H1 (cell line): ENCODE measurements at regions of chr1 and their contacts with region 1.

Region 1: GRCh38 chr1:165914136-165914798 is 86.9 kb downstream of the UCK2 start:
- DNase-seq: peak in 1 of 2 experiments; percentile 72
- H3K4me3 ChIP-seq: no peak overlapping the region
- H3K27ac ChIP-seq: no peak overlapping the region
- H3K4me1 ChIP-seq: no peaks in the 10 kb centered on the region
- H3K27me3 ChIP-seq: no peaks in the 10 kb centered on the region
- CTCF ChIP-seq: peak; percentile 15 to 90 (median 83)
- EP300 ChIP-seq: no peak
- POLR2A ChIP-seq: no peak
- RAD21 ChIP-seq: peak; percentile 95

Region 2: GRCh38 chr1:165717918-165718515 is 196.2 kb before region 1 on chr1:
- CTCF ChIA-PET with region 1: interaction called, 10 read pairs
- POLR2A ChIA-PET with region 1: interaction called, 3 read pairs
- DNase-seq: peak in 1 of 2 experiments; percentile 64
- H3K4me3 ChIP-seq: no peak overlapping the region
- H3K27ac ChIP-seq: no peak overlapping the region
- H3K4me1 ChIP-seq: peaks cover 0 to 2% (median 0%) of the 10 kb centered on the region in 4 experiments; a peak in 1 of 7 replicates
- H3K27me3 ChIP-seq: no peaks in the 10 kb centered on the region
- CTCF ChIP-seq: peak in 2 of 3 experiments; percentile 67 to 85; a peak in 3 of 4 replicates
- EP300 ChIP-seq: no peak
- POLR2A ChIP-seq: no peak
- RAD21 ChIP-seq: peak; percentile 93 to 95

Region 3: GRCh38 chr1:165836664-165837482 is 77.4 kb before region 1 on chr1:
- CTCF ChIA-PET with region 1: no interaction called
- POLR2A ChIA-PET with region 1: no interaction called
- DNase-seq: no peak
- H3K4me3 ChIP-seq: 0 out of 8 replicates have a peak overlapping the region, but pooled peaks of 1 of the 4 experiments have one; percentile 18
- H3K27ac ChIP-seq: no peak overlapping the region
- H3K4me1 ChIP-seq: peaks cover 14 to 44% (median 28%) of the 10 kb centered on the region in 4 experiments
- H3K27me3 ChIP-seq: no peaks in the 10 kb centered on the region
- CTCF ChIP-seq: no peak
- EP300 ChIP-seq: no peak
- POLR2A ChIP-seq: no peak
- RAD21 ChIP-seq: no peak

Region 4: GRCh38 chr1:165884690-165885304 is 29.5 kb before region 1 on chr1:
- CTCF ChIA-PET with region 1: interaction called, 26 read pairs
- POLR2A ChIA-PET with region 1: no interaction called
- DNase-seq: no peak
- H3K4me3 ChIP-seq: no peak overlapping the region
- H3K27ac ChIP-seq: no peak overlapping the region
- H3K4me1 ChIP-seq: peaks cover 0 to 13% (median 2%) of the 10 kb centered on the region in 4 experiments; a peak in 2 of 7 replicates
- H3K27me3 ChIP-seq: no peaks in the 10 kb centered on the region
- CTCF ChIP-seq: no peak
- EP300 ChIP-seq: no peak
- POLR2A ChIP-seq: no peak
- RAD21 ChIP-seq: no peak

Region 5: DNA sequence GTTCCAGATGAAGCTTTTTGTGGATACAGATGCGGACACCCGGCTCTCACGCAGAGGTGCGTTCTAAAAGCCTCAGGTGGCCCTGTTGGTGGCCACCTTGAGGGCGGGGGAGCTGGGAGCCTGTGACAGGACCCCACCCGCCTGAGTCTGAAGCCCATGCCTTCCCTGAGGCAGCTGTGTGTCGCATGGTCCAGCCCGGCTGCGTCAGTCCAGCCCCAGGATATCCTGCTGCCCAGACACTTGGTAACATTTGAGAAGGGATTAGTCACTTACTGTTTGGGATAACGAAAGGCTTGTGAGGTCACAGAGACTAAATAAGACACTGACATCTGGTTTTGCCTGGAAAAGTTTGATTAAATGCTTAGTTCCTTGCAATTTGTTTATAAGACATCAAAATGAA is 18.0 kb before region 1 on chr1:
- CTCF ChIA-PET with region 1: interaction called, 15 read pairs
- POLR2A ChIA-PET with region 1: interaction called, 5 read pairs
- DNase-seq: no peak
- H3K4me3 ChIP-seq: no peak overlapping the region
- H3K27ac ChIP-seq: no peak overlapping the region
- H3K4me1 ChIP-seq: peaks cover 0 to 3% (median 0%) of the 10 kb centered on the region in 4 experiments; a peak in 2 of 7 replicates
- H3K27me3 ChIP-seq: no peaks in the 10 kb centered on the region
- CTCF ChIP-seq: no peak
- EP300 ChIP-seq: no peak
- POLR2A ChIP-seq: no peak
- RAD21 ChIP-seq: no peak

Region 6: GRCh38 chr1:165928075-165928731 is 13.9 kb after region 1 on chr1:
- CTCF ChIA-PET with region 1: interaction called, 75 read pairs
- POLR2A ChIA-PET with region 1: no interaction called
- DNase-seq: peak in 1 of 2 experiments; percentile 70
- H3K4me3 ChIP-seq: no peak overlapping the region
- H3K27ac ChIP-seq: no peak overlapping the region
- H3K4me1 ChIP-seq: peaks cover 0 to 2% (median 0%) of the 10 kb centered on the region in 4 experiments; a peak in 1 of 7 replicates
- H3K27me3 ChIP-seq: no peaks in the 10 kb centered on the region
- CTCF ChIP-seq: peak in 2 of 3 experiments; percentile 72 to 82; a peak in 3 of 4 replicates
- EP300 ChIP-seq: no peak
- POLR2A ChIP-seq: no peak
- RAD21 ChIP-seq: peak; percentile 77

Region 7: GRCh38 chr1:165933446-165934178 is 19.3 kb after region 1 on chr1:
- CTCF ChIA-PET with region 1: interaction called, 75 read pairs
- POLR2A ChIA-PET with region 1: no interaction called
- DNase-seq: no peak
- H3K4me3 ChIP-seq: peak overlapping the region in 1 of 4 experiments; percentile 15; a peak in 3 of 8 replicates
- H3K27ac ChIP-seq: no peak overlapping the region
- H3K4me1 ChIP-seq: peaks cover 5 to 12% (median 7%) of the 10 kb centered on the region in 4 experiments
- H3K27me3 ChIP-seq: no peaks in the 10 kb centered on the region; a peak in 1 of 7 replicates
- CTCF ChIP-seq: no peak
- EP300 ChIP-seq: no peak
- POLR2A ChIP-seq: no peak
- RAD21 ChIP-seq: no peak